HepG2 (cell line): ENCODE measurements at regions of chr4 and their contacts with region 1.

Region 1: GRCh38 chr4:142353149-142353738 is 492.9 kb downstream of the INPP4B start:
- DNase-seq: peak; percentile 27
- ATAC-seq: peak; percentile 48; the same call in 2 of the 3 replicates
- H3K4me3 ChIP-seq: no peak overlapping the region
- H3K27ac ChIP-seq: no peak overlapping the region
- H3K4me1 ChIP-seq: no peaks in the 10 kb centered on the region
- H3K27me3 ChIP-seq: no peaks in the 10 kb centered on the region
- CTCF ChIP-seq: peak; percentile 63
- EP300 ChIP-seq: no peak
- POLR2A ChIP-seq: no peak
- RAD21 ChIP-seq: no peak

Region 2: DNA sequence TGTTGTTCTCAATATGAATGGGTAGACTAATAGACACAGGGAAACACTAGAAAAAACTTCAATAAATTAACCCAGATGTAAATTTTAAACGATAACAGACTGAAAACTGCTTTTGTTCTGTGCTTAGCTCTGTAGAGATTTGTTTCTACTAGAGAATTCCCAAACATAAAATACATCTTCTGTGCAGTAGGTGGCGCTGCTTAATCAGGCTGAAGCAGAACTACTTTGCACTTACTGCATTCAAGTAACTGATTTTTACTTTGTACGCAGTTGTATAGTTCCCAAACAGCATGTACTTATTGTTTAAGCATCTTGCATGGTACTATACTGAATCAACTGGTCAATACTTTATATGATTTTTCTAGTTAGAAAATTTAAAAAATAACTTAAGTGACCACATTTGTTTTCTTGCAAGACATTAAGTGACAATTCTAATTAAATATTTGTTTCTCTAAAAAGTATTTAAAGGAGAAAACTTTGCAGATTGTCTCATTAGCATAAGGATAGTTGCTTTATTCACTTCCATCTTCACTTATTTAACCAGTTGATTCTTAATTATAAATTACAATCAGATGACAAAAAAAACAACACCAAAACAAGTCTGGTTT is 226.2 kb before region 1 on chr4:
- CTCF ChIA-PET with region 1: no interaction called
- POLR2A ChIA-PET with region 1: no interaction called
- in situ Hi-C with region 1: no loop called
- intact Hi-C with region 1: loop called (anchors 5 kb)
- DNase-seq: peak; percentile 31
- ATAC-seq: peak; percentile 62
- H3K4me3 ChIP-seq: no peak overlapping the region
- H3K27ac ChIP-seq: no peak overlapping the region
- H3K4me1 ChIP-seq: no peaks in the 10 kb centered on the region
- H3K27me3 ChIP-seq: no peaks in the 10 kb centered on the region
- CTCF ChIP-seq: peak; percentile 74
- EP300 ChIP-seq: no peak
- POLR2A ChIP-seq: no peak
- RAD21 ChIP-seq: peak; percentile 33; the same call in 1 of the 2 replicates

Region 3: GRCh38 chr4:142307857-142308256 is 45.4 kb before region 1 on chr4:
- CTCF ChIA-PET with region 1: no interaction called
- POLR2A ChIA-PET with region 1: no interaction called
- in situ Hi-C with region 1: no loop called
- intact Hi-C with region 1: no loop called
- DNase-seq: no peak
- ATAC-seq: no peak
- H3K4me3 ChIP-seq: no peak overlapping the region
- H3K27ac ChIP-seq: no peak overlapping the region
- H3K4me1 ChIP-seq: no peaks in the 10 kb centered on the region
- H3K27me3 ChIP-seq: no peaks in the 10 kb centered on the region
- CTCF ChIP-seq: no peak
- EP300 ChIP-seq: no peak
- POLR2A ChIP-seq: no peak
- RAD21 ChIP-seq: no peak

Region 4: GRCh38 chr4:142558851-142559250 is 205.6 kb after region 1 on chr4:
- CTCF ChIA-PET with region 1: no interaction called
- POLR2A ChIA-PET with region 1: no interaction called
- in situ Hi-C with region 1: no loop called
- intact Hi-C with region 1: no loop called
- DNase-seq: no peak
- ATAC-seq: no peak
- H3K4me3 ChIP-seq: no peak overlapping the region
- H3K27ac ChIP-seq: no peak overlapping the region
- H3K4me1 ChIP-seq: no peaks in the 10 kb centered on the region
- H3K27me3 ChIP-seq: no peaks in the 10 kb centered on the region
- CTCF ChIP-seq: no peak
- EP300 ChIP-seq: no peak
- POLR2A ChIP-seq: no peak
- RAD21 ChIP-seq: no peak

Region 5: GRCh38 chr4:142719854-142720541 is 366.8 kb after region 1 on chr4:
- CTCF ChIA-PET with region 1: interaction called, 4 read pairs
- POLR2A ChIA-PET with region 1: no interaction called
- in situ Hi-C with region 1: loop called (anchors 10 kb)
- intact Hi-C with region 1: loop called (anchors 1 kb)
- DNase-seq: no peak
- ATAC-seq: no peak
- H3K4me3 ChIP-seq: no peak overlapping the region
- H3K27ac ChIP-seq: no peak overlapping the region
- H3K4me1 ChIP-seq: no peaks in the 10 kb centered on the region
- H3K27me3 ChIP-seq: no peaks in the 10 kb centered on the region
- CTCF ChIP-seq: no peak
- EP300 ChIP-seq: no peak
- POLR2A ChIP-seq: no peak
- RAD21 ChIP-seq: no peak

Region 6: DNA sequence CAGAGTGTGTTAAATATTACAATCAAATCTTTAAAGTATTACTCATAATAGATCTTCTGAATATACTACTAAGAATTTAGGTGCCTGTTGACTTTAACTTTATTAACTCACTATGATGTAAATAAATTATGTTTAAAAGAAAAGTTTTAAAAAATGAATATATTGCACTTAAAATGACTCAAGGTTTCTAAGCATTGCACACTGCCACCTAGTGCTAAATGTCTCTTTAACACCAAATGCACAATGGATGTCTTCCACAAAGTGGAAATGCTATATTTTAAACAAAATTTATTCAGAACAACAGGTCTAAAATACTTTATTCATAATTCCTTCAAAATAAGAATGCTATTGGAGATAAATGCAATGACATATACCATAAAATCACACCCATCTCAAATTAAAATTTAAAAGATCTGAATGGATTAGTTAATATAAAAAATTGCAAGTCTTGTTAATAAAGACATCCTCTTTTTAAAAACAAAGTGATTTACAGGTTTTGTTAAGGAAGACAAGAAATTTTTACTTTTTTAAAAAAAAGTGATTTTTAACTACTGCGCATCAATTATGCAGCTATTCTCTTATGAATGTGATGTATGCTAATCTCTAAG is 487.4 kb after region 1 on chr4:
- CTCF ChIA-PET with region 1: interaction called, 7 read pairs
- POLR2A ChIA-PET with region 1: no interaction called
- in situ Hi-C with region 1: loop called (anchors 5 kb)
- intact Hi-C with region 1: loop called (anchors 1 kb)
- DNase-seq: peak; percentile 3
- ATAC-seq: no peak
- H3K4me3 ChIP-seq: no peak overlapping the region
- H3K27ac ChIP-seq: no peak overlapping the region
- H3K4me1 ChIP-seq: no peaks in the 10 kb centered on the region
- H3K27me3 ChIP-seq: peaks cover 0 to 8% of the 10 kb centered on the region in 2 experiments; a peak in 2 of 5 replicates
- CTCF ChIP-seq: peak; percentile 46
- EP300 ChIP-seq: no peak
- POLR2A ChIP-seq: no peak
- RAD21 ChIP-seq: no peak

Region 7: GRCh38 chr4:142846729-142847596 is 493.7 kb after region 1 on chr4:
- CTCF ChIA-PET with region 1: no interaction called
- POLR2A ChIA-PET with region 1: no interaction called
- in situ Hi-C with region 1: loop called (anchors 5 kb)
- intact Hi-C with region 1: no loop called
- DNase-seq: peak; percentile 10
- ATAC-seq: peak; percentile 95
- H3K4me3 ChIP-seq: no peak overlapping the region
- H3K27ac ChIP-seq: no peak overlapping the region
- H3K4me1 ChIP-seq: no peaks in the 10 kb centered on the region
- H3K27me3 ChIP-seq: peaks cover 2 to 21% of the 10 kb centered on the region in 2 experiments; a peak in 4 of 5 replicates
- CTCF ChIP-seq: peak; percentile 55
- EP300 ChIP-seq: no peak
- POLR2A ChIP-seq: no peak
- RAD21 ChIP-seq: no peak